GM18951 (cell line): ENCODE measurements at regions of chr1 and their contacts with region 1.

Region 1: GRCh38 chr1:44029906-44030604 is 1.2 kb downstream of the SLC6A9 start:
- POLR2A ChIP-seq: peak; percentile 60

Region 2: DNA sequence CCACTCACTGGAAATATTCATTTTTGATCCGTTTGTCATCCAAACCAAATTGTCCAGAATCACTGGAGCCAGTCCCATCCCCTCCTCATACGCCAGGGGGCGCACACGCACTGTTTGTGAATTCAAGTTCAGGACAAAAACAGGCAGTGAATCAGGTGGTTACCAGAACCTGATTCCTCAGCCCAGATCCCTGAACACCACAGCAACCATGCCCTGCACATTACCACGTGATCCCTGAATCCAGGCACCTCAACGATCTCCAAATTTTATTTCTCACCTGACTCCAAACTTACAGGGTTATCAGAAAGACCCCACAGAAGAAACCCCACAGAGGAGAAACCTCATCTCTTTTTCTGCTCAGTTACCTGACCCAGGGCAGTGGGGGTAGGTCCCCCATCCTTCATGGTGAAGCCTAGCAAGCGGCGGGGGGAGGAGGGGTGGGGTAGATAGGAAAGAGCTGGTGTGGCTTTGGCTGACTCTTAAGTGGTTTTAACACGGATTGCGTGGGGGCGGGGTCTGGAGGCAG is 500.8 kb before region 1 on chr1:
- in situ Hi-C with region 1: loop called (anchors 25 kb)
- POLR2A ChIP-seq: no peak

Region 3: GRCh38 chr1:43671626-43672330 is 358.3 kb before region 1 on chr1:
- in situ Hi-C with region 1: no loop called
- POLR2A ChIP-seq: no peak

Region 4: DNA sequence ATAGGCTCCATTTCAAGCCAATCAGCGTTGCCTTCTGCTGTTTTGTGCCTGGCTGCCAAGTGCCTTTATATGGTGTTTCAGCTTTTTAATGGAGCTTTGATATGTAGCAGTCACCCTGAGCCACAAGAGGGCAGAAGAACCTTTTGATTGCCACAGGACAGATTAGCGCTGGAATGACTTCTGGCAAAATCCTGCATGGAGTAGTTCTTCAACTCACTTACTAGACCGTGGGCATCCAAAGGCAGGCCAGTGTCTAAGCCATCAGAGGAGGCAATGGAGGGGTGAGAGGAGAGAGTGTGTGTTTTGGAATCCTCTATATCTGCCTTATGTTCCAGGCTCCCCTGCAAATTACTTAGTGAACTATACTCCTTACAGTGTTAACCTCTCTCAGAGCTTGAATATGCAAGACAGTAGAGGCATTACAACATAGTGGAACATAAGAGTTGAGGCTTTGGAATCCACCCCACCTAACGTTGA is 266.5 kb before region 1 on chr1:
- in situ Hi-C with region 1: no loop called
- POLR2A ChIP-seq: no peak

Region 5: DNA sequence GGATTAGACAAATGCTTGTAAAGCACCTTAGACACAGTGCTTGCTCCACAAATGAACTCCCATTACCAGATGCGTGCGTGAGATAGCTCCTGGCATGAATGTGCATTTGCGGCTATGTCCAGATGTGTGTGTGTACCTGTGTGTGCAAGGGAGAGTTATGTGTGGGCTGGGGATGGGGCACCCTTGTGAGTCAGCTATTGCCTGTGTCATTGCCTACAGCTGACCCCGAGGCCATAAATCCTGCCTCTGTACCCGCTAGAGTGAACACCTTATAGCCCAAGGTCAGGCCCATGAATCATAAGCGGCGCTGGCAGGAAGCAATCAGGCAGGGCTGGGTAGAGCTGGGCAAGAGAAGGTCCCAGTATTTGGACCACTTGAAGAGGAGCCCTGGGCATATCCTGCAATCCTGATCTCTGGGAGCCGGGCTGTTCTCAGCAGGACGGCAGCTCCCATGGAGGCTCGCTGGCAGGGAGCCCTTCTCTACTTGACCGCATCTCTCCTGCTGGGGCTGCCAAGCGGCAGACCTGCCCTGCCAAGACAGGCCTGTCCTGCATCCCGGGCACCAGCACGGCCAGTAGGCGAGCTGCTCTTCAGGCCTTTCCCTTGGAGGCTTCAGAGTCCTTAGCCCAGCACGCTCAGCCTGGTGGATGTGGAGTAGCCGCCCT is 557.9 kb after region 1 on chr1:
- in situ Hi-C with region 1: no loop called
- POLR2A ChIP-seq: no peak